Panc1 (cell line): ENCODE measurements at regions of chr15 and their contacts with region 1.

Region 1: DNA sequence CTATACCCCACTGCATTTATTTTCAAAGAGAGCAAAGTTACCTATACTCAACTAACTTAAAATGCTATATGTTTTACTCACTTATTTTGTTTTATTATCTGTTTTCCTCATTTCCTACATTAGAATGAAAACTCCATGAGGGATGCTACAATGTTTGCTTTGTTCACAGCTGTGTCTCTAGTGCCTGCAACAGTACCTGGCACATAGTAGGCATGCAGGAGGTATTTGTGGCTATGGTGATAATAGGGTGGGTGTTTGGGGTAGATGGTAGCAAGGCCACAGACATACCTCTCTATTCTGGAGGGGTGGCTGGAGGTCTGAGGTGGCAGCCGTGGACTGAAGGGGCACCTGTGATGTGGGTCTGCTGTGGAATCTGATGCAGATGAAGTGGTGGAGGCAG is 24.7 kb upstream of the SMAD6 start:
- DNase-seq: no peak
- ATAC-seq: no peak
- H3K4me3 ChIP-seq: no peak overlapping the region
- H3K27ac ChIP-seq: no peak overlapping the region
- H3K4me1 ChIP-seq: no peaks in the 10 kb centered on the region
- H3K27me3 ChIP-seq: no peaks in the 10 kb centered on the region
- CTCF ChIP-seq: no peak

Region 2: DNA sequence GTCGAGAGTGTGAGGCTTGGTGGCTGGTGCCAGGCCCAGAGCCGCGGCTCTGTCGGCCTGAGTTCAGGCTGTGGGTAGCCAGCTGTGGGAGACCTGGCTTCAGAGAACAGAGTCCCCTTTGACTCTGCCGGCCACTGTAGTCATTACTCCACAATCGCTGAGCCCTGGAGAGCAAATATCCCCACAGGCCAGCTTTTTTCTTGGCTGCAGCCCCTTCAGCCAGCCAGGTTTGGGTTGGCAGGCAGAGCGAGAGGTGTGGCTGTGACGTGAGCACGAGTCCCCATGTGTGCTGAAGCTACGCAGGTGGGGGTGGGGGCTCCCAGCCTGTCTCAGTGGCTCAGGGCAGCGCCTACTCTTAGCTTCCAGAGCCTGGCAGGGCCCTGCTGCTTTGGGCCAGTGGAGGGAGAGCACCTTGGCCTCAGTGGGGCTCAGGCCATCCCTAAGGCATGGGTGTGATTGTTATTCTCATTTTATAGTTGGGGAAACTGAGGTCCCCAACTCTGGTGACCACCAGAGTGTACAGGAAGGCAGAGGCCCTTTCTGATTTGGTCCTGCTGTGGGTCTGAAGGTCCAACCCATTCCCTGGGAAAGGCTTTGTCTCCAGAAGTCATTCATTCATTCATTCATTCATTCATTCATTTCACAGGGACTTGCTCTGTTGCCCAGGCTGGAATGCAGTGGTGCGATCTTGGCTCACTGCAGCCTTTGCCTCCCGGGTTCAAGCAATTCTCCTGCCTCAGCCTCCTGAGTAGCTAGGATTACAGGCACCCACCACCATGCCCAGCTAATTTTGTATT is 65.9 kb before region 1 on chr15:
- CTCF ChIA-PET with region 1: no interaction called
- POLR2A ChIA-PET with region 1: no interaction called
- in situ Hi-C with region 1: no loop called
- intact Hi-C with region 1: no loop called
- DNase-seq: no peak
- ATAC-seq: peak; percentile 85
- H3K4me3 ChIP-seq: no peak overlapping the region
- H3K27ac ChIP-seq: peak overlapping the region; percentile 8; the same call in 1 of the 2 replicates
- H3K4me1 ChIP-seq: no peaks in the 10 kb centered on the region
- H3K27me3 ChIP-seq: no peaks in the 10 kb centered on the region
- CTCF ChIP-seq: no peak

Region 3: DNA sequence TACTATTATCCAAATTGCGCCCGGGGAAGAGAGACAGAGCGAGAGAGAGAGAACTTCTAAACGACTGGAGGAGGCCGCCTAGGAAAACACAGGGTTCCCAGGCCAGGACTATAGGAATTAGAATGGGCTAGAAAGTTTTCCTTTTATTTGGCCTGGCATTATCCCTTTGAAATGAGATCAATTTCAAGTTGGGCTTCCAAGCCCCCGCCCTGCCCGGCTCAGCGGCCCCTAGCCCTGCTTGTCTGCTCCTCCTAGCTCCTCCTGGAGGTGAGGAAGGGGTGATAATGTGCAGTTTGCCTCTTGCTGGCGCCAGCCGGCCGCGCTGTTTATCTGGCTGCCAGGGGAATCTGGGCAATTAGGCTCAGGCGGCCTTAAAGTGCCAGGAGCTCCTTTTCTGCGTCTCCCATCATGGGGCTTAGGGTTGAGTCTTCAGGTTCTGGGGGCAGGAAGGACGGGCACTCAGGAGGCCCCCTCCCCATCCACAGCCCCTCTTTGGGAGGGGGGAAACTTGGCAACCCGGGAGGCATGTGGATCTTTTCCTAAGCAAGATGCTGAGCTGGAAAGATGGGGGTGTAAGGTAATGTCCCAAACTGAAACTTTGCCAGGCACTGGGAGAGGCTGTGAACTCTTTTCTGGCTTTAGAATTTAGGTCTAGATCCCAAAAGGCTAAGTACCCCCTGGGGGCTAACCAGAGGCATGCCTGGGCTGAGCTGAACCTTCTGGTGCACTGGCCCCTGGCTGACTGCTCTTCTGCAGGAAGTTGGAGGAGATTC is 30.2 kb after region 1 on chr15:
- CTCF ChIA-PET with region 1: no interaction called
- POLR2A ChIA-PET with region 1: no interaction called
- in situ Hi-C with region 1: no loop called
- intact Hi-C with region 1: no loop called
- DNase-seq: no peak
- ATAC-seq: peak; percentile 32
- H3K4me3 ChIP-seq: peak overlapping the region; percentile 91 to 97
- H3K27ac ChIP-seq: peak overlapping the region; percentile 94
- H3K4me1 ChIP-seq: peaks cover 80% of the 10 kb centered on the region
- H3K27me3 ChIP-seq: no peaks in the 10 kb centered on the region
- CTCF ChIP-seq: peak; percentile 56; the same call in 1 of the 2 replicates

Region 4: DNA sequence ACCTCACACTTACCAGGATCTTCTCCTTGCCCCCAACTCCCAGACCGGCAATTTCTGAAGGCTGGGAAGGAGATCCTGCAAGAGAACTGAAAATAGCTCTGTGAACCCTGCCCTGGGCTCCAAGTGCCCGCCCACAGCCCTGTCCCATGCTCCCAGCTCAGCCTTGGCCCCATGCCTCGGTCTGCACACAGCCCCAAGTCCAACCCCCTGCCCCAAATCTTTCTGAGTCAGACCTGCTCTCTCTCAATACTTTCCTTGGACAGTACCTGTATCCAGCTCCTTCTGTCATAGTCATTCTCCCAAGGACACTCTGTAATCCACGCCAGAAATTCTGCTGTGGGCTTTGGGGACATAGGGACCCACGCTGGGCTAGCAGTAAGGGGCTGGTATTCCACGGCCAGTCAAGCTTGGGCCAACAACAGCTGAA is 381.8 kb after region 1 on chr15:
- CTCF ChIA-PET with region 1: interaction called, 10 read pairs
- POLR2A ChIA-PET with region 1: no interaction called
- in situ Hi-C with region 1: no loop called
- intact Hi-C with region 1: no loop called
- DNase-seq: no peak
- ATAC-seq: peak; percentile 23; the same call in 1 of the 2 replicates
- H3K4me3 ChIP-seq: no peak overlapping the region
- H3K27ac ChIP-seq: peak overlapping the region; percentile 73
- H3K4me1 ChIP-seq: peaks cover 40% of the 10 kb centered on the region
- H3K27me3 ChIP-seq: no peaks in the 10 kb centered on the region
- CTCF ChIP-seq: no peak